ENCODE measurements at regions of chr12 and their contacts with region 1.

Region 1: GRCh38 chr12:98593351-98594049 is at the start of gene SLC25A3:
- DNase-seq: peak; percentile 98
- ATAC-seq: peak; percentile 100
- H3K4me3 ChIP-seq: peak within 1 kb of the TSS; percentile 59 to 98
- H3K27ac ChIP-seq: peak within 1 kb of the TSS; percentile 69 to 93
- H3K4me1 ChIP-seq: no peaks in the 10 kb centered on the region
- H3K27me3 ChIP-seq: no peaks in the 10 kb centered on the region
- total RNA-seq, gene SLC25A3: 310 to 358 TPM

Region 2: GRCh38 chr12:98418357-98419075 is 175.0 kb before region 1 on chr12:
- intact Hi-C with region 1: loop called in 1 of 2 experiments (anchors 5 kb)
- DNase-seq: peak; percentile 96 to 97
- ATAC-seq: peak; percentile 90
- H3K4me3 ChIP-seq: no peak overlapping the region
- H3K27ac ChIP-seq: peak overlapping the region; percentile 91 to 94
- H3K4me1 ChIP-seq: no peaks in the 10 kb centered on the region
- H3K27me3 ChIP-seq: no peaks in the 10 kb centered on the region

Region 3: DNA sequence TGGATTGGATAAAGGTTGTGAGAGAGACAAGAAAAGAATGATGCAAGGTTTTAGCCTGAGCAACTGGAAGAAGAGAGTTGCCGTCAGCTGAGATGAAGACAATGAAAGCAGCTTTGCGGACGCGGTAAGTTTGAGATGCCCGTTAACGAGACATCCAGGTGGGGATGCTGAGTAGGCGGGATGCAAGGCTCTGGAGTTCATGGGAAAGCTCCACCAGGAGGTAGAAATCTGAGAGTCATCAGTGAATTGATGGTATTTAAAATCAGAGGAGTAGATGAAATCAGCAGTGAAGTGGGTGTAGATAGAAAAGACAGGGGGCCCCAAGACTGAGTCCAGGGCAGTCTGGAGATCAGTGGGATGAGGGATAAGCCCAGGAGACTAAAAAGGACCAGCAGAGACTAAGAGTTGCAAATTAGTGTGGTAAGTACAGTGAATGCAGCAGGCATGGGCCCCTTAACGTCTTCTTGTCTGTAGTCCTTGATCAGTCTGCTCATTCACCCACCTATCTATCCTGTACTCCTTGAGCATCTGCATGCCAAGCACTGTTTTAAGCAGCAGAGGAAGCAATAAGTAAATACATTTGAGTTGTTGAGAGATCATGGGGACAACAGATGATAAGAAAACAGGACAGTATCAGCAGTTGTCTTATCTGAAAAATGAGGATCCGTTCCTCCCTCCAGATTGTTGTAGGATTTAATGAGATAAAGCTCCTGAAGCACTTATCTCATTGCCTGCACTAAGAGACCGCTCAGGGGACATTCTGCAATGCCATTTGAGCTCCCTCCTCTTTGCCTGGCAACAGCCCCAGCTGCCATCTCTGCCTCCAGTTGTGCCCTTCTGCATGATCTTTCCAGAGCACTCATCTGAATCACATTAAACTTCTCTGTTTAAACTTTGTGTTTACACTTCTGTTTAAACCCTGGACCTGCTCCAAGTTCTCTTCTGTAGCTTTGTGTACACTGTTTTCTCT is 143.1 kb after region 1 on chr12:
- intact Hi-C with region 1: no loop called
- DNase-seq: no peak
- ATAC-seq: no peak
- H3K4me3 ChIP-seq: no peak overlapping the region
- H3K27ac ChIP-seq: no peak overlapping the region
- H3K4me1 ChIP-seq: no peaks in the 10 kb centered on the region
- H3K27me3 ChIP-seq: no peaks in the 10 kb centered on the region

Region 4: DNA sequence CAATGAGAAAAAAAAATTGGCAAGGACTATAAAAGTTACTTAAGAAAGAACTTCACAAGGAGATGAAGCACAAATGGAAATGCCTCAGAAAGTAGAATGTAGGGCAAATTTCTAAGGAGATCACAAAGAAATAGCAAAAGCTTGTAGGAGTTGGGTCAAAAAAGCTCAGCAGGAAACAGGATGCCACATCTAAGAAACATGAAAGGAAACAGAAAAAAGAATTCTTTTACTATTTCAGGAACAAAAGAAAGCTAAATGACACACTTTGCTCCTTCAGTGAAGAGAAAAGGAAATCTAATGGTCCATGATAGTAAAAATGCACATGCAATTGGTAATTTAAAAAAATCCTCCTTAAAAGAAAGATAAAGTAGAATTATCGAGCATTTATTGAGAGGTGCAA is 602.0 kb after region 1 on chr12:
- intact Hi-C with region 1: no loop called
- DNase-seq: no peak
- ATAC-seq: no peak
- H3K4me3 ChIP-seq: no peak overlapping the region
- H3K27ac ChIP-seq: no peak overlapping the region
- H3K4me1 ChIP-seq: no peaks in the 10 kb centered on the region
- H3K27me3 ChIP-seq: no peaks in the 10 kb centered on the region

Measured in aorta (tissue), 5 donors.